GM10248 (cell line): ENCODE measurements at regions of chr7 and their contacts with region 1.

Region 1: GRCh38 chr7:16982640-16983350 is 101.0 kb upstream of the AGR3 start:
- DNase-seq: no peak
- CTCF ChIP-seq: peak; percentile 88

Region 2: DNA sequence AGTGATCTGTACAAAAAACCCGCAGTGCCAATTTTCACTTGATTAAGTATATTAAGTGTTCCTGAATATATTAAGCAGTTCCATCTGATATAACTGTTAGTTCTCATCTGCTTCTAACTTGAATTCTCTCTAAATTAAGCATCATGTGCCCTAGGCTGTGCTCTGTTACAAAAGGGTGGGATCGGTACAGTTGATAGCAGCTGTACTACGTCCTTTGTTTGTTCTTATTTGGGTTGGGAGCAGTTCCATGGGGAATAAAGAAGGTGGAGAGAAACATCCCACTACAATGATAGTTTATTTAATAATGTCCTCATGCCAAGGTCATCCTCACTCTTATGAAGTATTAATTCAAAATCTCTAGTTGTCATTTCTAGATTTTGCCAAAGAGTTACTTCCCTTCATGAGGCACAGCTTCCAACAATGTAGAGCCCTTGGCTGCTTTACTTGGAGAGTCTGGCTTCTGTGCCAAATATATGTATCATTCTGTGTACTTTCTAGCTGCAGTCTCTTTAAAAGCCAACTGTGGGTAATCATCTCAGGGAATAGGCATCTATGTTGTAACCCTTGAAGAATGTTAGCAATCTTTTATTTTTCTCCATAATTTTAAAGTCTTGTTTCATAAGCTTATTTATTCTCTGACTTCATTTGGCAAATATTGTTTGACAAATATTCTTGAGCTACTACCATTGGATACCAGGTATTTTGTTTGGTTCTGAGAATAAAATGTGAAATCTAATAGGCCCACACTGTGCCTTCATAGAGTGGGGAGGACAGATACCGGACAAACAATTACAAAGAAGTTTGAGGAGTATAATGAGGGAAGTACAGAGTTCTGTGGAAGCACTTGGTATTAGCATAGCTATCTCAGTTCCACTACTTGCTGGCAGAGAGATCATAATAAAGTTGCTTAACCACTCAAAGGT is 293.2 kb after region 1 on chr7:
- CTCF ChIA-PET with region 1: interaction called, 12 read pairs
- POLR2A ChIA-PET with region 1: no interaction called
- DNase-seq: no peak
- CTCF ChIP-seq: no peak

Region 3: DNA sequence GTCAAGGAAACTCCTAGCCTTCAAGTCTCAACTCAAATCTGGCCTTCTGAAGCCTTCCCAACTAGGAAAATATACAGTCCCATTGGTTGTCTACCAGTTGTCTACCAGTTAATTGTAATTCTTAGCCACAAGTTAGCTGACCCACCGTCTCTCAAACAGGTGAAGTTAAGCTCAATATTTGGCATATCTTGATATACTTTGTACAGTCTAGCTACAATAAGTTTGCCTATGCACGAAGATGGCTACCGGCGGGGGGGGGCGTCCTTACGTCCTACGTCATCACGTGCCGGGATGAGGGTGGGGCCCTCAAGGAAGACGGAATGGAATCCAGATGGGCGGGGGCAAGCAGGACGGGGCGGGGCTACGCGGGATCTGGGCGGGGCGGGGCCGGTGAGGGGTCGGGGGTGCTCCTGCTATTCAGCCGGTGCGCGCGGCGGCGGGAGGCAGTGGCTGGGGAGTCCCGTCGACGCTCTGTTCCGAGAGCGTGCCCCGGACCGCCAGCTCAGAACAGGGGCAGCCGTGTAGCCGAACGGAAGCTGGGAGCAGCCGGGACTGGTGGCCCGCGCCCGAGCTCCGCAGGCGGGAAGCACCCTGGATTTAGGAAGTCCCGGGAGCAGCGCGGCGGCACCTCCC is 315.5 kb after region 1 on chr7 and contains the start of gene AHR:
- CTCF ChIA-PET with region 1: interaction called, 30 read pairs
- POLR2A ChIA-PET with region 1: no interaction called
- DNase-seq: peak; percentile 91
- CTCF ChIP-seq: no peak